ENCODE measurements at regions of chr14 and their contacts with region 1.

Region 1: DNA sequence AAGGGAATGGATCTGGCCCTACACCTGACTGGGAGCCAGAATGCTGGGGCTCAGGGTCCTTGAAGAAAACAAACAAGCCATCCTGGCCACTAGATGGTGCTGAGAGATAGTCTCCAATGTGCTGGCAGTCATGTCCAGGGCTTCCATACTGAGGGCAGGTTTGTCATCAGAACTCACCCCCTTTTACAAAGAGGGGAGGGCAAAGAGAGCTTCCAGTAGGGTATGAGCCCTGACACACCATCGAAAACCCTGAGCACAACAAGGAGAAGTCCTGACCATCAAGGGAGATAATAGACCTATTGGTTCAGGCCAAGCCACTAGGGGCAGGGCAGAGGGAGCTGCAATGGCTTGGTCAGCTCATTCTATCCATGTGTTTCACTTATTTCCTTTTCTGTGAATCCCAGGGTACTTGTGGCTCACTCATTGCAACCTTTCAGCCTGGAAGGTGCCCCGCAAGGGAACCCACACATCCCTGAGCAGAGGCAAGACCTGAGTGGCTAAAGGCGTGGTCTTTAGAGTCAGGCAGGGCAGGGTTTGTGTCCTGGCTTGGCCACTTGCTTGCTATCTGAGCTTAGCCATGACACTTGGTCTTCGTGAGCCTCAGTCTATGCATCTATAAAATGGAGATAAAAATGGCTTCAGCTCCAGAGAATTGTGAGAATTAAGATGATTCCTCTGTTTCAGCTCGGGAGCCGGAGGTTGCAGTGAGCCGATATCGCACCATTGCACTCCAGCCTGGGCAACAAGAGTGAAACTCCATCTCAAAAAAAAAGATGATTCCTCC is 6.2 kb upstream of the PLEKHH1 start:
- DNase-seq: peak in 6 of 10 donors; percentile 33 to 90 (median 58)

Region 2: DNA sequence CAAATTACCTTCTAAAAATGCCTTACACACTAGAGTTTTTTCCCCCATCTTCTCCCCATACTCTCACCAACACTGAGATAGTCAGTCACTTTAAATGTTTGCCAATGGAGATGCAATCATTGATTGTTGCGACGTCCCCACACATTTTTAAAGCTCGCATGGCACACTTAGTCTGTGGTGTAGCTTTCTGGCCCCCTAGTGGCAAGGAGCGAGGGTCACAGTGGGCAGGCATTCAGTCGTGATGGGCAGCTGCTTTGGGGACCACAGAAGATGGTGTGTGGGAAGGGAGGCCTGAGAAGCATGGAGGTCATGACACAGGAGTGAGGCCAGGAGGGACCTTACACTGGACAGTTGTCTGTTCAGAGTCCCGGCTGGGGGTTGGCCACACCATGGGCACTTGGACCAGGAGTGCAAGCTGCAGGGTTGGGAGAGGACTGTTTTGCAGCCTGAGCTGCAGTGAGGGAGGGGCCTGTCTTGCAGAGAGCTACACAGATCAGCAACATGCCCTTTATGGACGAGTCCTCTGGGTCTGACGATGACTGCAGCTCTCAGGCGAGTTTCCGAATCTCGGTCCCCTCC is 44.5 kb after region 1 on chr14:
- intact Hi-C with region 1: loop called (anchors 2 kb)
- DNase-seq: peak in 9 of 10 donors; percentile 52 to 95 (median 76)

Region 3: GRCh38 chr14:68418174-68419118 is 891.6 kb after region 1 on chr14:
- intact Hi-C with region 1: no loop called
- DNase-seq: no peak